Activated CD4-positive, alpha-beta memory T cell treated with anti-CD3 and anti-CD28 coated beads for 36 hours (primary cell): ENCODE measurements at regions of chr3 and their contacts with region 1.

Region 1: GRCh38 chr3:157174649-157175498 is 14.9 kb upstream of the CCNL1 start:
- DNase-seq: peak; percentile 99
- H3K4me3 Mint-ChIP-seq: peak overlapping the region; percentile 89
- H3K27ac Mint-ChIP-seq: peak overlapping the region; percentile 99
- H3K4me1 Mint-ChIP-seq: peaks cover 25% of the 10 kb centered on the region
- H3K27me3 Mint-ChIP-seq: no peaks in the 10 kb centered on the region

Region 2: DNA sequence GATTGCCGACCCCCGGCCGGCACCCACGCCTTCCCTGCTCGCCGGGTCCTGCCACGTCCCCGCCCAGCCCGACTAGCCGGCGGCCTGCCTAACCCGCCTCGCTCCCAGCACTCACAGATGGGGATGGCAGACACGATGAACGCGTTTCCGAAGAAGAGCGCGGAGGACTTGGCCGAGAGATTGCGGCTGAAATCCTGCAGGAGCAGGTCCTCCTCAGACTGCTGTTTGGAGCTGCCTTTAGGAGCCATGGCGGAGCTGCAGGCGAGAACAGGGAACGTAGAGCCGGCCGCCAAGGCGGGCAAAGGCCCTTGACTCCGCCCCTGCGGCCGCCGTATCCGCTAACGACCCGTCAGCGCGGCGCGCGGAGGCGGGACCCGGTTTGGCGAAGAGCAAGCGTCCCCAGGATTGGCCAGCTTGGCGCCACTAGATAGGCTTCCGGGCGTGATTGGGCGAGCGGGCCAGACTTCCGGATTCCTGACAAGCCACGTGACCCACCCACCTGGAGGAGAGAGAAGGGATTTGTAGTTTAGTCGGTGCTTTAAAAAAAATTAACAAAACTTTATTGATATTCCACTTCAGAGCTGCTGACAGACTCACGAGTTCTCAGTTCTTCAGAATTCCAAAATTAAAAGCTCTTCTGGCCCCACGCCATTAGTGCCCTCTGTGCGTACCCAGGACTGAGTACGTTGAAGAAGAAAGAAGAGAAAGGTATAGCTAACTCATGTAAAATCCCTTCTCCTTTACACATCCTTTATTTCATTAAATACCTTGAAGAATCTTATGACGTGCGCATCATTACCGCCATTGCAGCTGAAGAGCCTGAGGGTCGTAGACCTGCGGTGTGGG is 619.8 kb before region 1 on chr3 and contains the start of gene SSR3:
- CTCF ChIA-PET with region 1: no interaction called
- POLR2A ChIA-PET with region 1: interaction called, 13 read pairs
- intact Hi-C with region 1: loop called (anchors 1 kb)
- DNase-seq: peak; percentile 99
- H3K4me3 Mint-ChIP-seq: peak within 1 kb of the TSS; percentile 97
- H3K27ac Mint-ChIP-seq: peak within 1 kb of the TSS; percentile 88
- H3K4me1 Mint-ChIP-seq: peaks cover 46% of the 10 kb centered on the region
- H3K27me3 Mint-ChIP-seq: no peaks in the 10 kb centered on the region
- total RNA-seq, gene SSR3: 162 to 170 TPM

Region 3: DNA sequence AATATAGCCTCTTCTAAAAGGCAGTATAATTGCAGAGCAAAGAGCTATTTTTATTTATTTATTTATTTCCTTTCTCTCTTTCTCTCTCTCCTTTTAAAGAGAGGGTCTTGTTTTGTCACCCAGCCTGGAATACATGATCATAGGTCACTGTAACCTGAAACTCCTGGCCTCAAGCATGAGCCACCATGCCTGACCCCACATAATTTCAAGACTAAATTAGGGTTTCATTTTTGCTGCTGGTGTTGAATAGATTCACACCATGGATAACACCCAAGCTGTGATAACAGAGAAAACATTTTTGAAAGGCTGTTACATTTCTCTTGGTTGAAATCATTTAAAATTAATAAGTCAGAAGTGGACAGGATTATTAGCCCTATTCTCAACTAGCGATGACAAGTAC is 217.2 kb before region 1 on chr3:
- CTCF ChIA-PET with region 1: no interaction called
- POLR2A ChIA-PET with region 1: no interaction called
- intact Hi-C with region 1: no loop called
- DNase-seq: no peak
- H3K4me3 Mint-ChIP-seq: no peak overlapping the region
- H3K27ac Mint-ChIP-seq: no peak overlapping the region
- H3K4me1 Mint-ChIP-seq: no peaks in the 10 kb centered on the region
- H3K27me3 Mint-ChIP-seq: peaks cover 4% of the 10 kb centered on the region

Region 4: GRCh38 chr3:157088601-157089454 is 86.0 kb before region 1 on chr3:
- CTCF ChIA-PET with region 1: no interaction called
- POLR2A ChIA-PET with region 1: interaction called, 6 read pairs
- intact Hi-C with region 1: loop called (anchors 1 kb)
- DNase-seq: peak; percentile 96
- H3K4me3 Mint-ChIP-seq: peak overlapping the region; percentile 72
- H3K27ac Mint-ChIP-seq: peak overlapping the region; percentile 96
- H3K4me1 Mint-ChIP-seq: peaks cover 64% of the 10 kb centered on the region
- H3K27me3 Mint-ChIP-seq: no peaks in the 10 kb centered on the region

Region 5: DNA sequence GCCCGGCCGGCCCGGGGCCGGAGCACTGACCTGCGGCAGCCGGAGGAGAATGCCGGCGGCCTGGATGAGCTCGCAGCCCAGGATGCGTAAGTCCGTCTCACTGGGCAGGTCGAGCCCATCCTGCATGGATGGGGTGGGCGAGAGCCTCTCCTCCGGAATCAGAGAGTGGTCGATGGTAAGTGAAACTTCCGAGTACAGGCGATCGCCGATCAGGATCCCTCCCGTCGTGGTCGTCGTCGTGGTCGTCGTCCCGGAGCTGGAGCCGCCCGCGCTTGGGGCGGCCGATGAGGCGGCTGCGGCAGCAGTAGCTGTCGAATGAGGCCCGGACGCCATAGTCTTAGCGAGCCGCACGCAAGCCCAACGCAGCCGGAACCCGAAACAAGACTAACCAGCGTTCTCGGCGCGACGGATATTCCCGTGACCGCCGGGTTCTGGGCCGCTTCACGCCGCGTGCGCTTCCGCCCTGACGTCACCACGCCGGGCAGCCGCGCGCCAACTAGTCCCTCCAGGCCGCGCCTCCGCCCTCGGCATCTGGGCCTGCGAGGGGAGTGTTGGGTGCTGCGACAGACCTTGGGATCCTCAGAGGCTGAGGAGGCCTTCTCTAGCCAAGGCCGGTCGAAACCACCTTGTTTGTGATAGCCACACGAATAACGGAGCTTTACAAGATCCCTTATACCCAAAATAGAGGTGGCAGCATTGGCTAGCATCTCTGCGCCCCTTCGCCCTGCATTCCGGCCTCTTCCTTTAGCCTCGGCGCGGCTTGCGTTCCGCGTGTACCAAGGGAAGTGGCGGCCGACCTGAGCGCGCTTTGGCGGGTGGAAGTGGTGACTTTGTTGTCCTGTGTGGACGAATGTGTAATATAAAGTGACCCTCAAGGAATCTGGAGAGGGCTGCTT is 14.9 kb before region 1 on chr3 and contains the start of gene CCNL1:
- CTCF ChIA-PET with region 1: interaction called, 43 read pairs
- POLR2A ChIA-PET with region 1: interaction called, 251 read pairs
- intact Hi-C with region 1: loop called (anchors 1 kb)
- DNase-seq: peak; percentile 96
- H3K4me3 Mint-ChIP-seq: peak within 1 kb of the TSS; percentile 94
- H3K27ac Mint-ChIP-seq: peak within 1 kb of the TSS; percentile 99
- H3K4me1 Mint-ChIP-seq: peaks cover 46% of the 10 kb centered on the region
- H3K27me3 Mint-ChIP-seq: peaks cover 2% of the 10 kb centered on the region
- total RNA-seq, gene CCNL1: 144 to 150 TPM

Region 6: GRCh38 chr3:157239082-157239704 is 64.3 kb after region 1 on chr3:
- CTCF ChIA-PET with region 1: interaction called, 6 read pairs
- POLR2A ChIA-PET with region 1: interaction called, 3 read pairs
- intact Hi-C with region 1: loop called (anchors 1 kb)
- DNase-seq: peak; percentile 85
- H3K4me3 Mint-ChIP-seq: no peak overlapping the region
- H3K27ac Mint-ChIP-seq: no peak overlapping the region
- H3K4me1 Mint-ChIP-seq: peaks cover 3% of the 10 kb centered on the region
- H3K27me3 Mint-ChIP-seq: no peaks in the 10 kb centered on the region

Region 7: GRCh38 chr3:157692468-157692867 is 517.6 kb after region 1 on chr3:
- CTCF ChIA-PET with region 1: no interaction called
- POLR2A ChIA-PET with region 1: no interaction called
- intact Hi-C with region 1: no loop called
- DNase-seq: no peak
- H3K4me3 Mint-ChIP-seq: no peak overlapping the region
- H3K27ac Mint-ChIP-seq: no peak overlapping the region
- H3K4me1 Mint-ChIP-seq: no peaks in the 10 kb centered on the region
- H3K27me3 Mint-ChIP-seq: no peaks in the 10 kb centered on the region